ENCODE measurements at regions of chr17 and their contacts with region 1.

Region 1: DNA sequence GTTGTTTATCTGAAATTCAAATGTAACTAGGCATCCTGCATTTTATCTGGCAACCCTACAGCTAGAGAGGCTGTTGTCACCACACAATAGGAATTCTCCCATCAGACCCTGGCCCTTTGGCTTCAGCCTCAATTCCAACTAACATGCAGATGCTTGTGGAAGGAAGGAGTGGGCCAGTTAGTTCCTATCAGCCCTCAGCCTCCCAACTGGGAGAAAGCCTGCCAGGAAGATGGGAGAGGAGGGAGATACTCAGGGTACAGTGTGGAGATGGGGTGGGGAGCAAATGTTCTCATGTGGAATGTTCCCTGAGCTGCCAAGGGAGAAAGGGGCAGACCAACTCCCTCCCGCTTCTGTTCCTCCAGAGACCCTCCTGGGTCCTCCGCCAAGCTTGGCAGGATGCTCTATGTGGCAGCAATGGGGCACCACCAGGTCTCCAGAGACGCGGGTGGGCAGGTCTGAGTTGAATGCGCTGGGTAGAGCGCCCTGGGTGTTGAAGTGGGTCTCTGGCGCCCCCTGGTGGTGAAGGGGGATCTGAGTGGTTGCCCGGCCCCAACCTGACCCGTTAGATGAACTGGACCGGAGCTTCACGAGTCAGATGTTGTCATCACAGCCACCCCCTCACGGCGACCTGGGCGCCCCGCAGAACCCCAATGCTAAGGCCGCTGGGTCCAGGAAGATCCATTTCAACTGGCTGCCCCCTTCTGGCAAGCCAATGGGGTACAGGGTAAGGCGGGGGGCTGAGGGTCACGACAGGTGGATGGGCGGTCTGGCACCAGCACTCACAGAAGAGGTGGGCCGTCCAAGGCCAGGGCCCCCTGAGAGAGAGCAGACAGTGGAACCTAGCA is 15.2 kb downstream of the GALK1 start:
- DNase-seq: peak; percentile 89

Region 2: GRCh38 chr17:75679706-75680442 is 69.9 kb before region 1 on chr17:
- in situ Hi-C with region 1: loop called (anchors 10 kb)
- DNase-seq: no peak

Measured in SK-MEL-5 (cell line).